BJ (cell line): ENCODE measurements at regions of chr1 and their contacts with region 1.

Region 1: GRCh38 chr1:174204697-174205308 is 45.5 kb downstream of the RABGAP1L start:
- DNase-seq: no peak
- H3K4me3 ChIP-seq: no peak overlapping the region
- H3K27me3 ChIP-seq: no peaks in the 10 kb centered on the region
- CTCF ChIP-seq: no peak

Region 2: GRCh38 chr1:174165471-174166137 is 39.2 kb before region 1 on chr1:
- CTCF ChIA-PET with region 1: no interaction called
- POLR2A ChIA-PET with region 1: no interaction called
- DNase-seq: no peak
- H3K4me3 ChIP-seq: no peak overlapping the region
- H3K27me3 ChIP-seq: no peaks in the 10 kb centered on the region
- CTCF ChIP-seq: no peak

Region 3: DNA sequence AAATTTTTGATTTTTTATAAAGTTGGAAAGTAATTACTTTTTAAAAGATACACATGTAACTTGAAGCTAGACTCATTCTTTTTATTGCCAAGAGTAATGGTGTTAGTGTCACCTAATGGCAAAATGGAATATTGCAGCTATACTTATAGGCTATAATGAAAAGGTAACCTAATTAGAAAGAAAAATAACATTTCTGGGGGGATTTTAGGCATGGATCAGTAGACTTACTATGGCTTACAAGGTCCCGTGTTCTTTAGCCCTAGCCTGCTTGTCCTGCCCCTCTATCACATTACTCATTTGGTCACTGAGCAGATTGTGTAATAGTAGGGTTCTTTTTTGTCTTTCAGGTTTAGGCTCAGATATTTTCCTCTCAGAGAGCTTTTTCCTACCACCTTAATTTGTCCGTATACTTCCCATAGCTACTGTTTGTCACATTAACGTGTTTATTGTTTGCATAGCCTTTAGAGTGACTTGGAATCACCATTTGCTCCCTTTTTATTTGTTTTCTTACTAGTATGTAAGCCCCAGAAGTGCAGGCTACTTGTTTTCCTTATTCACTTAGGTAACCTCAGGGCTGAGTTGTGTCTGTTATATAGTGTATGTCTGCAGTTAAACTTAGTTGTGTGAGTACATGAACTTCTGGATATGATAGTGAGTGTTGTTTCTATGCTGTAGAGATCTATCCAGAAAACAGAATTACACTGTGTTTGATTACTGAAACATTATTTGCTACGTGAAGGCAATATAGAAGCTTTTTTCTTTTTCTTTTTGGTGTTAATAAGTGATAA is 13.2 kb after region 1 on chr1:
- CTCF ChIA-PET with region 1: interaction called, 16 read pairs
- POLR2A ChIA-PET with region 1: no interaction called
- DNase-seq: no peak
- H3K4me3 ChIP-seq: no peak overlapping the region
- H3K27me3 ChIP-seq: no peaks in the 10 kb centered on the region
- CTCF ChIP-seq: peak; percentile 67

Region 4: DNA sequence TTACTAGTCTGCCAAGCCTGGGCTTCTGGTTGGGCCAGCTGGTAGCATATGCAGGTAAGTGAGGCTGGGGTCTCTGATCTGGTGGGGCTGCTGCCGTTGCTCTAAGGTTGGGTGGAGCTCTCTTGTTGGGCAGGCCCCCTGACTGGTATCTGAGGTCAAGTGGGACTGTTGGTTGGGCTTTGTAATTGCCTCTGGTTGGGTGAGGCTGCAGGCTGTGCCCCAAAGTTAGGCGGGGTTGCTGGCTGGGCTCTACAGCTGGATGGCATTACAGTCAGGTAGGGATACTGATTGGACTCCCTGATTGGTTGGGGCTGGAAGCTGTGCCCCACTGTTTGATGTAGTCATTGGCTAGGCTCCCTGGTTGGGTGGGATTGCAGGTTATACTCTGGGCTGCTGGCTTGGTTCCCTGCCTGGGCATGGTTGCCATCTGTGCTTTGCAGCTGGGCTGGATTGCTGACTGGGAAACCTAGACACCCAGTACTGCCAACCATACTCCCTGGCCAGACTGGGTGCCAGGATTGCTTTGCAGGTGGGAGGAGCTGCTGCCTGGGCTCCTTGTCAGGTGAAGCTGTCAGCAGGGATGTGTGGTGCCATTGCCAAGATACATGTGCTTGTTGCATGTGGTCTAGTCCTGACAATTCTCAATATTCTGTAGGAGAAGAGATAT is 85.0 kb after region 1 on chr1:
- CTCF ChIA-PET with region 1: no interaction called
- POLR2A ChIA-PET with region 1: no interaction called
- DNase-seq: no peak
- H3K4me3 ChIP-seq: no peak overlapping the region
- H3K27me3 ChIP-seq: no peaks in the 10 kb centered on the region
- CTCF ChIP-seq: no peak

Region 5: GRCh38 chr1:174376030-174376429 is 171.2 kb after region 1 on chr1:
- CTCF ChIA-PET with region 1: no interaction called
- POLR2A ChIA-PET with region 1: no interaction called
- DNase-seq: no peak
- H3K4me3 ChIP-seq: no peak overlapping the region
- H3K27me3 ChIP-seq: no peaks in the 10 kb centered on the region
- CTCF ChIP-seq: no peak